Caco-2 (cell line): ENCODE measurements at regions of chr11 and their contacts with region 1.

Region 1: GRCh38 chr11:126440792-126441514 is 85.5 kb downstream of the ST3GAL4 start:
- DNase-seq: peak; percentile 88 to 94
- H3K4me3 ChIP-seq: no peak overlapping the region
- H3K4me3 Mint-ChIP-seq: no peak overlapping the region
- H3K27ac Mint-ChIP-seq: no peak overlapping the region
- H3K4me1 ChIP-seq: no peaks in the 10 kb centered on the region; the same call in 1 of the 2 replicates
- H3K4me1 Mint-ChIP-seq: peaks cover 7% of the 10 kb centered on the region
- H3K27me3 ChIP-seq: peaks cover 4% of the 10 kb centered on the region
- H3K27me3 Mint-ChIP-seq: peaks cover 35% of the 10 kb centered on the region
- CTCF ChIP-seq: peak; percentile 98 to 99

Region 2: DNA sequence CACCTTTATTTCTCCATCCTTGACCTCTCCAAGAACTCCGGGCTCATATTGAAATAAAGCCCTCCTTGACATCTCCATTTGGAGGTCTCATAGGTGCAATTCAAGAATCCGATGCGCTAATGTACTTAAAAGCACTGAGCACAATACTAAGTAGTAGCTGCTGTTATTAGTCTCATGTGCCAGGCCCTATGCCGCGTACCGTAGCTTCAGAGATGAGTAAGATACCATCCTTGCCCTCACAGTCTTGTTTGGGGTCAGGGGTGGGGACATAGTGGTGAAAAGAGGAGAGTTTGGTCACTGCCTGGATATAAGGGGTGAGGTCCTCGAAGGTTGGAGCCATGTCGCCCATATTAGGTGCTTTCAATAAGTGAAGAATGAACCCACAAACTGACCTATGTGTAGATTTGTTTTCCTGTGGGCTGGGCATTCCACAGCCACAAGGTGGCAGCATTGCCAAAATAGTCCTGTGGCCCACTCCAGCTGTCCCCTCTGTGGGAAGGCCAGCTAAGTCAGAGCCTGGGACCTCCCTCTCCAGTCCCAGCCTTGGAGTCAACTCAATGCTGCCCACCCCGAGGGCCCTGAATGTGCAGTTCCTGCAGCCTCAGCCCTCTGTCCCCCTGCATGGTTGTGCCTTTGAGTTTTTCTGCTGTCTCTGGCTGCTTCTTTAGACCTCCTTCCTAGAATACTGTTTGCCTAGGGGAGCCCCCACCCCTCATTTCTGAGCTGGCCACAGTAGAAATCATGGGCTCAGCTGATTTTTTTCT is 130.5 kb before region 1 on chr11:
- CTCF ChIA-PET with region 1: interaction called, 11 read pairs
- POLR2A ChIA-PET with region 1: no interaction called
- intact Hi-C with region 1: loop called (anchors 1 kb)
- DNase-seq: peak; percentile 81 to 86
- H3K4me3 ChIP-seq: no peak overlapping the region
- H3K4me3 Mint-ChIP-seq: no peak overlapping the region
- H3K27ac Mint-ChIP-seq: no peak overlapping the region
- H3K4me1 ChIP-seq: 0 out of 2 replicates have a peak, but pooled peaks cover under 1% of the 10 kb centered on the region
- H3K4me1 Mint-ChIP-seq: no peaks in the 10 kb centered on the region
- H3K27me3 ChIP-seq: no peaks in the 10 kb centered on the region
- H3K27me3 Mint-ChIP-seq: no peaks in the 10 kb centered on the region
- CTCF ChIP-seq: peak; percentile 89 to 99

Region 3: DNA sequence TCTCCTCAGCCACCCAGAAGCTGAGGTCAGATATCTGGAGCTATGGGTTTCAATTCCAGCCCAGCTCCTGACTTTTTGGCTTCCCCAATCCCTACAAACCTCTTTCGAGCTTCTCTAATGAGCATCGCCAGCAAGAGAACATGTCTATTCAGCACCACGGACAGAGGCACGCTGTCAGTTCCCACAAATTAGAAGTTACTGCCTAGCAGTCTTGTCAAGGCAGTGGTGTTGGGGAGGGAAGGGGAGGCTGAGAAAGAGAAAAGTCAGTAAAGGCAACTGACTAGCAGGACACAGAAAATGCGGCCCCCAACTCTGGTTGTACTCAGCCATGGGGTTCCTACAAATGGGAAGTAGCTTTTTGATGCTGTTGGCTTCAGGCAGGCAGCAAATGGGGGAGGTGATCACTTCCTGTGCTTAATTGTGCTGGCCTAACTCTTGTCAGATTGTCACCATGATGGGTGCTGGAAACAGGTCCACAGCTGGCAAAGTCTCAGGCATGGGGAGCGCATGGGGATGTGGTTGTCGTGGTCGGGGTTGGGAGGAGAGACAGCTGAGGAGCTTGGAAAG is 120.5 kb after region 1 on chr11:
- CTCF ChIA-PET with region 1: no interaction called
- POLR2A ChIA-PET with region 1: no interaction called
- intact Hi-C with region 1: loop called (anchors 5 kb)
- DNase-seq: peak; percentile 67 to 73
- H3K4me3 ChIP-seq: no peak overlapping the region
- H3K4me3 Mint-ChIP-seq: no peak overlapping the region
- H3K27ac Mint-ChIP-seq: no peak overlapping the region
- H3K4me1 ChIP-seq: no peaks in the 10 kb centered on the region
- H3K4me1 Mint-ChIP-seq: no peaks in the 10 kb centered on the region
- H3K27me3 ChIP-seq: no peaks in the 10 kb centered on the region
- H3K27me3 Mint-ChIP-seq: peaks cover 11% of the 10 kb centered on the region
- CTCF ChIP-seq: no peak

Region 4: DNA sequence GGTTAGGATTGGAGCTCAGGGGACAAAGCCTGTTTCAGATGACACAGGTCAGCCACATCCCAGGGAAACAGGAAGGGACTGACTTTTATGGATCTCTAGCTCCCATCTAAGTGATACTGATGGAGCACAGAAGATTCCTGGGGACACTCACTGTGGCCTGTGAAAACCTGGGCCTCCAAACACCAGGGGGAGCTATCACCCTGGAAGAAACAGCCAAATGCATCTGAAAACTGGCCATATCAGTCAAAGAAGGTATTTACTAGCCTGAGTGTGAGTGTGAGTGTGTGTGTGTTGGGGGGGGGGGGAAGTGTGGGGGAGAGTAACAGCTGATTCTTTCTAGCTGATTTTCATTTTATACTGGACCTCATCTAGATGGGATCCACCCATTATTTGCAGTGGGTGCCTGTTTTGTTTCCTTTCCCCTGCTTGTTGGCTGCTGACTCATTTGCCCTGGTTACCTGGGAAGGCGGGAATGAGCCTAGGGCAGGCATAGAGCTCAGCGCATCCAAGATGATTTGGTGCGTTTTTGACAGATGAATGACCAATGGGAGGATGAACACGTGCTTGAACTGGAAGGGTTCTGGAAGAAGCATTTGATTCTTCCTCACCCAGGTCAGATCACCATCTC is 275.6 kb after region 1 on chr11:
- CTCF ChIA-PET with region 1: interaction called, 3 read pairs
- POLR2A ChIA-PET with region 1: no interaction called
- intact Hi-C with region 1: loop called (anchors 1 kb)
- DNase-seq: peak in 1 of 2 experiments; percentile 71
- H3K4me3 ChIP-seq: no peak overlapping the region
- H3K4me3 Mint-ChIP-seq: no peak overlapping the region
- H3K27ac Mint-ChIP-seq: no peak overlapping the region
- H3K4me1 ChIP-seq: no peaks in the 10 kb centered on the region
- H3K4me1 Mint-ChIP-seq: no peaks in the 10 kb centered on the region
- H3K27me3 ChIP-seq: 0 out of 2 replicates have a peak, but pooled peaks cover 3% of the 10 kb centered on the region
- H3K27me3 Mint-ChIP-seq: peaks cover 36% of the 10 kb centered on the region
- CTCF ChIP-seq: peak; percentile 80 to 86

Region 5: GRCh38 chr11:127074151-127074761 is 633.3 kb after region 1 on chr11:
- CTCF ChIA-PET with region 1: interaction called, 3 read pairs
- POLR2A ChIA-PET with region 1: no interaction called
- intact Hi-C with region 1: loop called (anchors 1 kb)
- DNase-seq: peak; percentile 59 to 67
- H3K4me3 ChIP-seq: no peak overlapping the region
- H3K4me3 Mint-ChIP-seq: no peak overlapping the region
- H3K27ac Mint-ChIP-seq: no peak overlapping the region
- H3K4me1 ChIP-seq: no peaks in the 10 kb centered on the region
- H3K4me1 Mint-ChIP-seq: no peaks in the 10 kb centered on the region
- H3K27me3 ChIP-seq: no peaks in the 10 kb centered on the region; the same call in 1 of the 2 replicates
- H3K27me3 Mint-ChIP-seq: peaks cover 21% of the 10 kb centered on the region
- CTCF ChIP-seq: peak; percentile 60 to 79

Region 6: GRCh38 chr11:128039140-128040021 is 1598.4 kb after region 1 on chr11:
- CTCF ChIA-PET with region 1: no interaction called
- POLR2A ChIA-PET with region 1: no interaction called
- intact Hi-C with region 1: loop called (anchors 5 kb)
- DNase-seq: no peak
- H3K4me3 ChIP-seq: no peak overlapping the region
- H3K4me3 Mint-ChIP-seq: no peak overlapping the region
- H3K27ac Mint-ChIP-seq: no peak overlapping the region
- H3K4me1 ChIP-seq: no peaks in the 10 kb centered on the region
- H3K4me1 Mint-ChIP-seq: no peaks in the 10 kb centered on the region
- H3K27me3 ChIP-seq: no peaks in the 10 kb centered on the region
- H3K27me3 Mint-ChIP-seq: peaks cover 21% of the 10 kb centered on the region
- CTCF ChIP-seq: no peak